Sciatic nerve (tissue), 2 donors: ENCODE measurements at regions of chr5 and their contacts with region 1.

Region 1: GRCh38 chr5:172697123-172698121 is 56.4 kb downstream of the NEURL1B start:
- DNase-seq: peak; percentile 96
- ATAC-seq: peak; percentile 86

Region 2: GRCh38 chr5:171162602-171163001 is 1534.8 kb before region 1 on chr5:
- intact Hi-C with region 1: no loop called
- DNase-seq: no peak
- ATAC-seq: no peak

Region 3: DNA sequence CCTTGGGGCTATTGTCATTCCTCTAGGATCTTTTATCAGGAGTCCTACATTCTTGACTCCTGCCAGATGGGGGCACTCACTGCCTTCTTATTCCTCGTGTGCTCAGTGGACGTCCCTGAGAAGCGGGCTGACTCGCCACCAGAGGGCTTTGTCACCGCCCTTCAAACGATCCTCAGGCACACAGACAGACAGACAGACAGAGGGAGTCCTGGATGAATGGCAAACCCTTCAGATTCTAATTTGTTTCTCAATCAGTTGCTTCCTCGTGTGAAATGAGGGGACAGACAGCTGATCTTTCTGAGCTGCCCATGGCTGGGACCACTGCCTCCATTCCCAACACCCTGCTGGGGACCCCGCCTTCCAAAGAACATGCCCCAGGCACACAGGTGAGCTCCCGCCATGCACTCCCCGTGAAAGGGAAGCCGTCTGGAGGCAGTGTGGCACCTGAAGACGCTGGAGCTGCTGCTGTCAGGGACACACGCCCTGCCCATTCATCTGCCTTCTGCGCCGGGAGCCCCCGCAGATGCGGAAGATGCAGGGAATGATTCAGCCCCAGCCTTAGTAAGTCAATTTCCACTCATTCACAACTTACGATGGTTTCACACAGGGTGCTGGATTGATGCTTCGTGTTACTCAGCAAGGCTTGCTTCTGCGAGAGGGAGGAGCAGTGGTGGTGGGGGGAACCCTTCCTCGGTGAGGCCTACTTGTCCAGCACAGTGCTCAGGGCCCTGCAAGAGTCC is 218.2 kb before region 1 on chr5:
- intact Hi-C with region 1: loop called (anchors 2 kb)
- DNase-seq: peak; percentile 89
- ATAC-seq: peak; percentile 96

Region 4: GRCh38 chr5:172641359-172642050 is 55.9 kb before region 1 on chr5:
- intact Hi-C with region 1: loop called (anchors 2 kb)
- DNase-seq: peak; percentile 70
- ATAC-seq: peak; percentile 33

Region 5: GRCh38 chr5:172816901-172817564 is 119.6 kb after region 1 on chr5:
- intact Hi-C with region 1: no loop called
- DNase-seq: no peak
- ATAC-seq: no peak